Transverse colon (tissue), 4 donors: ENCODE measurements at regions of chr12 and their contacts with region 1.

Region 1: DNA sequence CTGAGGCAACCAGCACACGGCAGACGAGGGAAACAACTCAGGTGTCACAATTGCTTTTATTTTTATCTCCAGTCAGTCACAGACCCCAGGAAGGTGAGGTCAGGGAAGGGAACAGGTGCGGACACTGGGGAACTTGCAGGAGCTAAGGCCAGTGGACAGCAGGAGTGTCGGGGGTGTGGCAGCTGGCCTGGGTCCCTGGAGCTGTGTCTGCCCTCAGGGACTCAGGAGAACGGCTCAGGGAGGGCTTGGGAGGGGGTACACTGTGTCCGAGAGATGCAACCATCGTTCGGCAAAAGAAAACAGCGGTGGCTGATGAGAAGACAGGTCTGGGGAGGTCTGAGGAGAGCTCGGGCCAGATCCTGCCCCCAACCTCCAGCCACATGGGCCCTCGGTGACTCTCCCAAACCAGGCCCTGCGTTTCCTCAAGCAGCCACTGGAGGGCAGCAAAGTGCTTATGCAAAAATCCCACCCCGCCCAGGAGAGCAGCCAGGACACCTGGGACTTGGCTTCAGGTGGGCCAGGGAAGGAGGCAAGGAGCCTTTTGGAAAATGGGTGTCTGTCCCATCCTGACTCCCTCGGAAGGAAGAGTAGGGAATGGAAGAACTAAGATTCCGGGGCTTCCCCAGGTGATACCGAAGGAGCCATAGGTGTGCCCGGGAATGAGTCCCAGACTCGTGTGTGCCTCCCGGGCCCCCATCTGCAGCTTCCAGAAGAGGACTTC is 24.1 kb upstream of the BCDIN3D start:
- DNase-seq: peak; percentile 79
- H3K4me3 ChIP-seq: no peak overlapping the region
- H3K27ac ChIP-seq: no peak overlapping the region
- H3K4me1 ChIP-seq: peaks cover 3 to 22% (median 7%) of the 10 kb centered on the region in 4 donors
- H3K27me3 ChIP-seq: no peaks in the 10 kb centered on the region
- CTCF ChIP-seq: peak; percentile 85 to 99 (median 97)
- EP300 ChIP-seq: no peak
- POLR2A ChIP-seq: no peak

Region 2: DNA sequence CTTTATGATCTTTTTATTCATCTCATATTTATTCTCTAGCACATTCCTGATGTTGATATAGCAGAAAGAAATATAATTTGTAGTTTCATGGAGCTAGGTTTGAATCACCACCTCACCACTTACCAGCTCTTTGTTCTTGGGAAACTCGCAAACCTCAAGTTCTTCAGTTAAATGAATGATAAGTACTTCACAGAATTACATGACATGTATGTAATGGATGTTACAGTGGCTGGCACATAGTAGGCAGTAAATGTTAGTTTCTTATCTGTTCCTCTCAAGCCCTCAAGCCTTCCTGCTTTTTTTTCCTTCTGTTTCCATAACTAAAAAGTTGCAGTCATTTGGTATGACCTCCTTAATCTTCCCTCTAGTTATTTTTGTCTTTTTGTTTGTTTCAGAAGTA is 444.9 kb before region 1 on chr12:
- in situ Hi-C with region 1: no loop called
- intact Hi-C with region 1: no loop called
- DNase-seq: no peak
- H3K4me3 ChIP-seq: no peak overlapping the region
- H3K27ac ChIP-seq: no peak overlapping the region
- H3K4me1 ChIP-seq: peaks cover 0 to 13% (median 3%) of the 10 kb centered on the region in 4 donors
- H3K27me3 ChIP-seq: no peaks in the 10 kb centered on the region
- CTCF ChIP-seq: no peak
- EP300 ChIP-seq: no peak
- POLR2A ChIP-seq: no peak

Region 3: GRCh38 chr12:49974231-49974675 is 107.2 kb after region 1 on chr12:
- in situ Hi-C with region 1: no loop called
- intact Hi-C with region 1: no loop called
- DNase-seq: peak; percentile 65
- H3K4me3 ChIP-seq: no peak overlapping the region
- H3K27ac ChIP-seq: peak overlapping the region in 2 of 4 donors; percentile 32 to 68
- H3K4me1 ChIP-seq: peaks cover 0 to 14% (median 6%) of the 10 kb centered on the region in 4 donors
- H3K27me3 ChIP-seq: peaks cover 7% of the 10 kb centered on the region
- CTCF ChIP-seq: peak; percentile 41 to 58 (median 44)
- EP300 ChIP-seq: no peak
- POLR2A ChIP-seq: no peak

Region 4: GRCh38 chr12:50074936-50075807 is 208.2 kb after region 1 on chr12:
- in situ Hi-C with region 1: loop called in 2 of 4 experiments (anchors 25 kb)
- intact Hi-C with region 1: no loop called
- DNase-seq: peak; percentile 89
- H3K4me3 ChIP-seq: no peak overlapping the region
- H3K27ac ChIP-seq: peak overlapping the region in 1 of 4 donors; percentile 29
- H3K4me1 ChIP-seq: peaks cover 3 to 16% (median 6%) of the 10 kb centered on the region in 4 donors
- H3K27me3 ChIP-seq: no peaks in the 10 kb centered on the region
- CTCF ChIP-seq: peak; percentile 89 to 94 (median 93)
- EP300 ChIP-seq: no peak
- POLR2A ChIP-seq: no peak

Region 5: GRCh38 chr12:50661300-50662115 is 794.5 kb after region 1 on chr12:
- in situ Hi-C with region 1: no loop called
- intact Hi-C with region 1: no loop called
- DNase-seq: no peak
- H3K4me3 ChIP-seq: no peak overlapping the region
- H3K27ac ChIP-seq: no peak overlapping the region
- H3K4me1 ChIP-seq: peaks cover 0 to 33% (median 12%) of the 10 kb centered on the region in 4 donors
- H3K27me3 ChIP-seq: no peaks in the 10 kb centered on the region
- CTCF ChIP-seq: no peak
- EP300 ChIP-seq: no peak
- POLR2A ChIP-seq: no peak